ENCODE measurements at regions of chr15 and their contacts with region 1.

Region 1: DNA sequence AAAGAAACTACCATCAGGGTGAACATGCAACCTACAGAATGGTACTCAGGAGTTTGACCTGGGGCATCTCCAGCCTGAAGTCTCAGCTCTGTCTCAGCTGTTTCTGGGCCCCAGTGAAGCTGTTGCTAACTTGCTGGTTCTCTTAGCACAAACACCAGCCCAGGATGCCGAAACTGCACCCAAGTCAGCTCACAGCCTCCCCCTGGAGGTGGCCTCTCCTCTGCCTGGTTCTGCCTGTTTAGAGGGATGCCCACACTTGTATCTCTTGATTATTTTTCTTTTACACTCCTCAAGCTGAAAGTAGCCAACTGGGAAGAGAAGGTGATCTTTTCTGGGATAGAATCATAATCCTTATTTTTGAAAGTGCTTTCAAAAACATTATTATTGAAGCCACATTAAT is 289.0 kb upstream of the RASGRP1 start:
- DNase-seq: peak; percentile 50 to 73
- H3K4me3 ChIP-seq: no peak overlapping the region
- H3K27ac ChIP-seq: no peak overlapping the region
- H3K4me1 ChIP-seq: no peaks in the 10 kb centered on the region
- H3K27me3 ChIP-seq: no peaks in the 10 kb centered on the region
- CTCF ChIP-seq: peak; percentile 73 to 89 (median 80)
- EP300 ChIP-seq: no peak
- POLR2A ChIP-seq: no peak
- RAD21 ChIP-seq: peak; percentile 69 to 76

Region 2: GRCh38 chr15:38707802-38708671 is 145.6 kb before region 1 on chr15:
- CTCF ChIA-PET with region 1: interaction called, 11 read pairs
- POLR2A ChIA-PET with region 1: no interaction called
- DNase-seq: peak in 1 of 2 experiments; percentile 51
- H3K4me3 ChIP-seq: peak overlapping the region in 1 of 4 experiments; percentile 34; a peak in 1 of 8 replicates
- H3K27ac ChIP-seq: no peak overlapping the region
- H3K4me1 ChIP-seq: peaks cover 0 to 13% (median 6%) of the 10 kb centered on the region in 4 experiments; a peak in 4 of 7 replicates
- H3K27me3 ChIP-seq: no peaks in the 10 kb centered on the region
- CTCF ChIP-seq: peak; percentile 38 to 82 (median 80)
- EP300 ChIP-seq: no peak
- POLR2A ChIP-seq: no peak
- RAD21 ChIP-seq: peak; percentile 92 to 94

Region 3: DNA sequence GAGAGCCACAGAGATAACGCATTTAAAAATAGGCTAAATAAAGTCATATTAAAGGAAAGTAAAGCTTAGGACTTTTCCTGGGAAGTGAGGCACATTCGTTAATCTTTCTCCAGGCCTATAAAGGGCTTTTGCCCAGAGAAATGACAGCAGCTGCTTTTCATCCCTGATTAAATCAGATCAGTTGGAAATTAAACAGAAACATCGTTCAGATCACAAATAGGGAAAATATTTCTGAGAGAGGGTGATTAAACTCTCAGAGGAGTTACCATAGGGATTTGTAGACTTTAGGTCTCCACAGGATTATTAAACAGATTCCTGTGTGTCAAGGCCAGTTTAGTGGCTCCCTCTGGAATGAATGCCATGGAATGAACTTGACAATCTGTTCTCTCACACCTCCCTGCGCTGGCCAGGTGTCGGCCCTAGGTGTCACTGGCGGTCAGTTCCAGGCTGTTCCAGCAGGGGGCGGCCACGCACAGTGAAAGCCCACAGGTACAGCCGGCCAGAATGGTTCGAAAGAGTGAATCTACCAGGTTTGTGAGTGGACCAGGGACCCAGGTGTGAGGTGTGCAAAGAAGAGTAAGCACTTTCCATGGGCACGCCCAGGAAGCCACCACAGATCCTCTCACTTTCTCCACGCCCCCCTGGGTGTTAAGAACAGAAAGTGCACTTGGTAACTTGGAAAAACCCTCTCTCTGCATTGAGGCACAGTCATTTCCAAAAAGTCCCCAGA is 36.0 kb before region 1 on chr15:
- CTCF ChIA-PET with region 1: interaction called, 13 read pairs
- POLR2A ChIA-PET with region 1: interaction called, 5 read pairs
- DNase-seq: peak; percentile 59 to 99
- H3K4me3 ChIP-seq: no peak overlapping the region
- H3K27ac ChIP-seq: no peak overlapping the region
- H3K4me1 ChIP-seq: 0 out of 7 replicates have a peak, but pooled peaks cover 0 to 2% (median 0%) of the 10 kb centered on the region in 4 experiments
- H3K27me3 ChIP-seq: no peaks in the 10 kb centered on the region
- CTCF ChIP-seq: peak; percentile 99 to 100 (median 100)
- EP300 ChIP-seq: 0 out of 3 replicates have a peak, but pooled peaks of 1 of the 2 experiments have one; percentile 52
- POLR2A ChIP-seq: no peak
- RAD21 ChIP-seq: peak; percentile 98 to 99

Region 4: GRCh38 chr15:38864827-38865581 is 11.4 kb after region 1 on chr15:
- CTCF ChIA-PET with region 1: interaction called, 22 read pairs
- POLR2A ChIA-PET with region 1: no interaction called
- DNase-seq: no peak
- H3K4me3 ChIP-seq: no peak overlapping the region
- H3K27ac ChIP-seq: no peak overlapping the region
- H3K4me1 ChIP-seq: no peaks in the 10 kb centered on the region
- H3K27me3 ChIP-seq: no peaks in the 10 kb centered on the region
- CTCF ChIP-seq: no peak
- EP300 ChIP-seq: no peak
- POLR2A ChIP-seq: no peak
- RAD21 ChIP-seq: no peak